ENCODE measurements at regions of chr5 and their contacts with region 1.

Region 1: GRCh38 chr5:135010502-135011354 is 23.3 kb downstream of the PITX1 start:
- DNase-seq: no peak
- H3K4me3 ChIP-seq: no peak overlapping the region
- H3K27ac ChIP-seq: no peak overlapping the region
- H3K4me1 ChIP-seq: no peaks in the 10 kb centered on the region
- H3K27me3 ChIP-seq: no peaks in the 10 kb centered on the region
- CTCF ChIP-seq: peak; percentile 29 to 39

Region 2: GRCh38 chr5:134411546-134412266 is 599.0 kb before region 1 on chr5 and contains the start of gene CDKN2AIPNL:
- CTCF ChIA-PET with region 1: no interaction called
- dilution Hi-C with region 1: no loop called
- in situ Hi-C with region 1: no loop called
- intact Hi-C with region 1: no loop called
- DNase-seq: peak; percentile 81
- H3K4me3 ChIP-seq: peak within 1 kb of the TSS; percentile 85 to 91 (median 87)
- H3K27ac ChIP-seq: peak within 1 kb of the TSS; percentile 28
- H3K4me1 ChIP-seq: peaks cover 22% of the 10 kb centered on the region
- H3K27me3 ChIP-seq: no peaks in the 10 kb centered on the region
- CTCF ChIP-seq: peak; percentile 35 to 77
- total RNA-seq, gene CDKN2AIPNL: 28.7 to 30.0 TPM

Region 3: DNA sequence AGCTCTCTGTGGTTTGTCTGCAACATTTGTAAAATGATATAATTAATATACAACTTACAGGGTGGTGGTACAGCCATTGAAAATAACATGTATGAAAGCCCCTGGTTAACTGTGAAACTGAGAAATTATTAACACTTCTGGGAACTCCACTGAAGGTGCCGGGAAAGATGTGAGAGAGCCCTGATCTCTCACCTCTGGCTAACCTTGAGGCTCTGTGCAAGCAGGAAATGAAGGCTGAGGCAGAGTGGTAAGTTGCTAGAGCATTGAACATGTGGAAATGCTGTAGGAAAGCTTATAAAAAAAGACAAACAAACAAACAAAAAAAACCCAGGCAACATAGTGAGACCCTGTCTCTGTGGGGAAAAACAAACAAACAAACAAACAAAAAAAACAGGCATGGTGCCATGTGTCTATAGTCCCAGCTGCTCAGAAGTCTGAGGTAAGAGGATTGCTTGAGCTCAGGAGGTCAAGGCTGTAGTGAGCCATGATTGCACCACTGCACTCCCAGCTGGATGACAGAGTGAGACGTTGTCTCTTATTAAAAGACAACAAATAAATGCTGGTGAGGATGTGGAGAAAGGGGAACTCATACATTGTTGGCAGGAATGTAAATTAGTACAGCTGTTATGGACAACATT is 35.5 kb before region 1 on chr5:
- CTCF ChIA-PET with region 1: no interaction called
- dilution Hi-C with region 1: no loop called
- in situ Hi-C with region 1: no loop called
- intact Hi-C with region 1: loop called (anchors 2 kb)
- DNase-seq: peak; percentile 32
- H3K4me3 ChIP-seq: no peak overlapping the region
- H3K27ac ChIP-seq: no peak overlapping the region
- H3K4me1 ChIP-seq: peaks cover 8% of the 10 kb centered on the region
- H3K27me3 ChIP-seq: no peaks in the 10 kb centered on the region
- CTCF ChIP-seq: no peak

Region 4: DNA sequence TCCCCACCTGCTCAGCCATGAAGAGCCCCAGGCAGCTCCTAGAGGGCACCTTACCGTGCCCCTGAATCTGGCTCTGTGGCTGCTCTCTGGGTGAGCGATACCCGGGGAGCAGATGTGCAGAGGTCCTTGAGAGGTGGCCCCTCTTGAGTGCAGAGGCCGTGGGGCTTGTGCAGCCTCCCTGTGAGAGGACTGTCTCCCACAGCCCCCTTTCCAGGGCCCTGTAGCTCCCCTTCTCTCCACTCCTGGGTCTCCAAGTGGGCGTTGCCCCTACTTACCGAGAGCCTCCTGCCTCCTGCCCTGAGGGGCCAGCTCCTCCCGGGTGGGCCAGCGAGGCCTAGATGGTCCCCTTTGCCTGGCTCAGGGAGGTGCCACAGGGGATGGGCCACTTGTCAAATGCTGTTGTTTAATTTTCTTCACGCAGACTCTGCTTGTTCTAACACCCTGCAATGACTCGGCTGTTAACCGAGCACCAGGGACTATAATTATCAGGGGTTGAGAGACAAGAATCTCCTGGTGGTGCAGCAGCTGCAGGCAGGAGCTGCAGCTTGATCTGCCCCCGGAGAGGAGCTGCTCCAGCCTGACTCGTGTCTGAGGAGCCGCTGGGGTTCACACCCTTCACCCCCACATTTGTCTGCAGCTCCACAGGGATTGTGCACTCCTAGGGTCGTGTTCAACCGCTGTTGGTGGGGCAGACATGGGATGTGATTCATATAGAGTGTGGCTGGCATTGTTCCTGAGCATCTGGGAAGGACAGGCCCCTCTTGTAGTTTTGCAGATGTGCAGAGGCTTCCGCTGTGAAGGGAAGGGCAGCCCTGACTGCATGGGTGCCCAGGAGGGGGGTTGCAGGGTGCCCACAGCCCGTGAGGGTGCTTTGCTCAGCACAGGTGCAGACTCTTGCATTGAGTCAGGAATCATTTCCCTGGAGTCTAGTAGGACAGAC is 53.2 kb after region 1 on chr5:
- CTCF ChIA-PET with region 1: no interaction called
- dilution Hi-C with region 1: no loop called
- in situ Hi-C with region 1: no loop called
- intact Hi-C with region 1: no loop called
- DNase-seq: no peak
- H3K4me3 ChIP-seq: no peak overlapping the region
- H3K27ac ChIP-seq: no peak overlapping the region
- H3K4me1 ChIP-seq: no peaks in the 10 kb centered on the region
- H3K27me3 ChIP-seq: no peaks in the 10 kb centered on the region
- CTCF ChIP-seq: no peak

Region 5: DNA sequence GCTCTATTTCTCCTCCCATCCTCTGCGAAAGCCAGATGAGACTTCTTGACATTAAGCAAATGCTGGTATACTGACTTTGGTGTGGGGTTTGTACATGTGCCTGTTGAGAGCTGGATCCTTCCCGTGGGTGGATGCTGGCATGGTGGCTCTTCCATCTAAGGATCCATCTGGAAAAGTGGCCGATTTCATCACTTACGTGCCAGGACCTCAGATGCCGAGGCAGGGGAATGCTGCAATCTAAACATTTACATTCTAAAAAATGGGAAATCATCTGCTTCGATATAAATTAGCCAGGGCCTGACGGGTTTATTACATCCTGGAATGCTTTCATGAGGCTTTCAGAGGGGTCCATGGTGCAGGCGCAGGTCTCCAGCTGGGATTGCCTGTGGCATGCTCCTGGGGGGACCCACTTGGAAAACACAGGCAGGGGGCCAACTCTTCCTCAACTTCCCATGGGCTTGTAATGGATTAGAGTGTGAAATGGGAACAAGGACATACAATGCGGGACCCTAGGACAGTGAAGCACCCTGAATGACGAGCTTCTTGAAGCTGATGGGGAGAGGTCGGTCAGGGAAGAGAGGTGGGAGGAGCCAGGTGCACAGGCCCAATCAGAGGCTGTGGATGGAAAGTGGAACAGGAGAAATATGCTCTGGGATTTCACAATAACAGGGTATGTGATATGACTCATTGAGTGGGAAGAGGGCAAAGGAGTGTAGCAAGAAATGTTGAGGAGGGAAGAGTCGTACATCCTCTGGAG is 128.8 kb after region 1 on chr5:
- CTCF ChIA-PET with region 1: no interaction called
- dilution Hi-C with region 1: no loop called
- in situ Hi-C with region 1: no loop called
- intact Hi-C with region 1: no loop called
- DNase-seq: peak; percentile 85
- H3K4me3 ChIP-seq: no peak overlapping the region
- H3K27ac ChIP-seq: peak overlapping the region; percentile 50
- H3K4me1 ChIP-seq: peaks cover 56% of the 10 kb centered on the region
- H3K27me3 ChIP-seq: no peaks in the 10 kb centered on the region
- CTCF ChIP-seq: no peak

Region 6: GRCh38 chr5:135191084-135191826 is 180.5 kb after region 1 on chr5:
- CTCF ChIA-PET with region 1: no interaction called
- dilution Hi-C with region 1: no loop called
- in situ Hi-C with region 1: no loop called
- intact Hi-C with region 1: loop called (anchors 1 kb)
- DNase-seq: peak; percentile 63
- H3K4me3 ChIP-seq: peak overlapping the region in 2 of 3 experiments; percentile 35 to 54
- H3K27ac ChIP-seq: no peak overlapping the region
- H3K4me1 ChIP-seq: peaks cover 6% of the 10 kb centered on the region
- H3K27me3 ChIP-seq: no peaks in the 10 kb centered on the region
- CTCF ChIP-seq: peak; percentile 94 to 98

Measured in mammary epithelial cell (primary cell).